ENCODE measurements at regions of chr15 and their contacts with region 1.

Region 1: DNA sequence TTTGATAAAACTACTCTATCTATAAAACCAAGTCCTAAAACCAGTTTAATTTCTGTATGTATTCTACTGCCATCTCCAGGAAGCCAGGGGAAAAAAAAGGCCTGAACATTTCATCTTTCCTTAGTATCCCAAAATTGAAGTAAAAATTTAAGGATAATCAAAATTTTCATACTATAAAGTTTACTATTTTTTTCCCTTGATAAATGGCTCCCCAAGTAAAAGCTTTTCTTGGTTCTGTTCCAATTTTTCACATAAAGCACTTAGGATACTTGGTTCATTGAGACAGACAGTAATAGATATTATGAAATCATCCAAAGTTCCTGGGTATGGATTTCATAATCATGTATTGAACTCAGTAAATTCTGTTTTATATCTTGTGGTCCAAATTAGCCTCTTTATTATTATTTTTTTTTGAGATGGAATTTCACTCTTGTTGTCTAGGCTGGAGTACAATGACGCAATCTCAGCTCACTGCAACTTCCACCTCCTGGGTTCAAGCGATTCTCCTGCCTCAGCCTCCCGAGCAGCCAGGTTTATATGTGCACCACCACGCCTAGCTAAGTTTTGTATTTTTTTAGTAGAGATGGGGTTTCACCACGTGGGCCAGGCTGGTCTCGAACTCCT is 34.5 kb downstream of the ICE2 start:
- DNase-seq: no peak
- ATAC-seq: no peak

Region 2: DNA sequence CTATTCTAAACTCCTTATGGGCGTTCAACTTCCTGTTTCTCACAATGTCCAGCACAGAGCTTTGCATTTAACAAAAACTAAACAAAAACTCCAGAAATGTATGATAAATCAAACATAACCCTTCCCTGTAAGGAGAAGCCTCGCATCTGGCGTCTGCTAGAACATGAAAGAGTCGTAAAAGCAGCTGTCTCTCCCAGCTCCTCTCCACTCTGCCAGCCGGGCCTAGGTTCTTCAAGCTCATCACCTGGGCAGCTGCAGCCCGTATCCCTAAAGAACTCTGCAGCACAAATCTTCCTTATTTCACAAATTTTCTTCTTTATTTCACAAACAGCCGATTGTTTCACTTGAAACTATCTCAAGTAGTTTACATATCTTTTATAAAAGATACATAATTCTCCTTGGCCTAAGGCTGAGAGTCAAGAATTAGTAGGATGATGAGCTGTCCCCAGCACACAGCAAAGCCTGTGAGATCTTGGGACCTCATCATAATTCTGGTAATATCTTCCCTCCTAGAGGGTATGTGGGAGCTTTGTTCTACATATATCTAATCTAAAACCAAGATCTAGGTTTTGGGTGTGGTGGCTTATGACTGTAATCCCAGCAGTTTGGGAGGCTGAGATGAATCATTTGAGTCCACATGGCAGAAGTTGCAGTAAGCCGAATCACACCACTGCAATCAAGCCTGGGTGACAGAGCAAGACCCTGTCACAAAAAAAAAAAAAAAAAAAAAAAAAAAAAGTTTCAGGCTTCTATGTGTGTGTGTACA is 81.9 kb before region 1 on chr15:
- intact Hi-C with region 1: loop called (anchors 5 kb)
- DNase-seq: no peak
- ATAC-seq: peak; percentile 32

Region 3: DNA sequence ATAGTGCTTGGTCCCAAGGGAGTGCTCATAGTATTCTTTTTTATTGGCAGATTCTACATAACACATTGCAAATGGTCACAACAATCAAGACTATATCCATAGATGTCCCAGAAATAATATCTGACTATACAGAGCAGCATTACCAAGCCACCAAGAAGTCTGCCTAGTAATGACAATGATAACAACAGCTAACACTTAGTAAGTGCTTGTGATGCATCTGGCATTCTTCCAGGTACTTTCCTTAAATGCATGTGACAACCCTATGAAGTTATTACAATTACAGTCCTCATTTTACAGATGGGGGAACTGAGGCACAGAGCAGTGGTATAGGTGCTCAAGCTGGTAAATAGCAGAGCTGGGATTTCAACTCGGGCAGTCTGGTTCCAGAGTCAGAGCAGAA is 84.1 kb after region 1 on chr15:
- intact Hi-C with region 1: no loop called
- DNase-seq: no peak
- ATAC-seq: peak; percentile 43